Sigmoid colon (tissue), 7 donors: ENCODE measurements at regions of chr5 and their contacts with region 1.

Region 1: GRCh38 chr5:115377468-115378217 is 81.2 kb upstream of the CCDC112 start:
- DNase-seq: no peak
- H3K4me3 ChIP-seq: no peak overlapping the region
- H3K27ac ChIP-seq: peak overlapping the region in 2 of 4 donors; percentile 28 to 33
- H3K4me1 ChIP-seq: peaks cover 0 to 9% (median 6%) of the 10 kb centered on the region in 4 donors
- H3K27me3 ChIP-seq: no peaks in the 10 kb centered on the region
- CTCF ChIP-seq: peak in 3 of 4 experiments; percentile 18 to 37 (median 26)
- EP300 ChIP-seq: no peak
- POLR2A ChIP-seq: no peak

Region 2: DNA sequence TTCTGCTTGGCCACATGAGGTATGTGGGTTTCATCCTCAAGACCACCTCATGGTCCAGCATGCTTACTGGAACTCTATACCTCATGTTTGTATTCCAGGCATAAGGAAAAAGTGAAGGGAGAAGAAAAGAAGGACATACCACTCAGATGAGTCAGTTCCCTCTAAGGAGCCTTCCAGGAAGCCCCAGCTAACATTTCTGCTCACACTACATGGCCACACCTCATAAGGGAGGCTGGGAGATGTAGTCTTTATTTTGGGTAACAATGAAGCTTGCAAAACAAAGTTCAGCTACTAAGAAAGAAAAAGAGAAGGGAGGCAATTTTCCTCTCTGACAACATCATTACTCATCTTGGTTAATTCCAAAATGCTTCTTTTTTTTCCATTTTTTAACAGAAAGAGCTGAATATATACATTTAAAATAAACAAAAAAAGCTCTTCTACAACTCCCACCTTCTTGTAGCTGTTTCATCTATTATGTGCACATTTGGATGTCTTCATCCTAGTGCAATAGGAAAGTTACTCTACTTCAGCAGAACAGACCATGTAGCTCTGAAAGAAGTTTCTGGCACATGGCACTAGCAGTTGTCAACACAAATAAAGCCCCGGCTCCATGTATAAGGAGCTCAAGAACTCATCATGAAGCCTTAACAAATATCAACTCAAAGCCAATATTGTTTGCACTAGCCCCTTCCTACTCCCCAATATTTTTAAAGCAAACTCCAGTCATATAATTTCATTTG is 42.4 kb after region 1 on chr5:
- intact Hi-C with region 1: loop called (anchors 1 kb)
- DNase-seq: no peak
- H3K4me3 ChIP-seq: no peak overlapping the region
- H3K27ac ChIP-seq: peak overlapping the region in 1 of 4 donors; percentile 23
- H3K4me1 ChIP-seq: peaks cover 0 to 36% (median 29%) of the 10 kb centered on the region in 4 donors
- H3K27me3 ChIP-seq: no peaks in the 10 kb centered on the region
- CTCF ChIP-seq: no peak
- EP300 ChIP-seq: peak in 1 of 4 donors; percentile 13
- POLR2A ChIP-seq: no peak